BJ (cell line): ENCODE measurements at regions of chr20 and their contacts with region 1.

Region 1: GRCh38 chr20:39214828-39215227 is 252.7 kb downstream of the DHX35 start:
- DNase-seq: no peak
- H3K4me3 ChIP-seq: no peak overlapping the region
- H3K27me3 ChIP-seq: no peaks in the 10 kb centered on the region
- CTCF ChIP-seq: no peak

Region 2: GRCh38 chr20:39117491-39117890 is 97.3 kb before region 1 on chr20:
- CTCF ChIA-PET with region 1: no interaction called
- POLR2A ChIA-PET with region 1: interaction called, 12 read pairs
- DNase-seq: no peak
- H3K4me3 ChIP-seq: no peak overlapping the region
- H3K27me3 ChIP-seq: no peaks in the 10 kb centered on the region
- CTCF ChIP-seq: no peak

Region 3: GRCh38 chr20:39338469-39339376 is 123.9 kb after region 1 on chr20:
- CTCF ChIA-PET with region 1: no interaction called
- POLR2A ChIA-PET with region 1: no interaction called
- DNase-seq: no peak
- H3K4me3 ChIP-seq: no peak overlapping the region
- H3K27me3 ChIP-seq: no peaks in the 10 kb centered on the region
- CTCF ChIP-seq: no peak

Region 4: GRCh38 chr20:39861381-39861780 is 646.6 kb after region 1 on chr20:
- CTCF ChIA-PET with region 1: no interaction called
- POLR2A ChIA-PET with region 1: no interaction called
- DNase-seq: no peak
- H3K4me3 ChIP-seq: no peak overlapping the region
- H3K27me3 ChIP-seq: no peaks in the 10 kb centered on the region
- CTCF ChIP-seq: no peak